Heart right ventricle (tissue), 16 donors: ENCODE measurements at regions of chr12 and their contacts with region 1.

Region 1: GRCh38 chr12:27534060-27534764 is 10.2 kb downstream of the PPFIBP1 start:
- DNase-seq: no peak
- ATAC-seq: no peak
- H3K4me3 ChIP-seq: no peak overlapping the region
- H3K27ac ChIP-seq: peak overlapping the region in 4 of 10 donors; percentile 7 to 39 (median 19)
- H3K4me1 ChIP-seq: peaks cover 28 to 94% (median 77%) of the 10 kb centered on the region in 9 donors
- H3K27me3 ChIP-seq: no peaks in the 10 kb centered on the region
- CTCF ChIP-seq: no peak

Region 2: DNA sequence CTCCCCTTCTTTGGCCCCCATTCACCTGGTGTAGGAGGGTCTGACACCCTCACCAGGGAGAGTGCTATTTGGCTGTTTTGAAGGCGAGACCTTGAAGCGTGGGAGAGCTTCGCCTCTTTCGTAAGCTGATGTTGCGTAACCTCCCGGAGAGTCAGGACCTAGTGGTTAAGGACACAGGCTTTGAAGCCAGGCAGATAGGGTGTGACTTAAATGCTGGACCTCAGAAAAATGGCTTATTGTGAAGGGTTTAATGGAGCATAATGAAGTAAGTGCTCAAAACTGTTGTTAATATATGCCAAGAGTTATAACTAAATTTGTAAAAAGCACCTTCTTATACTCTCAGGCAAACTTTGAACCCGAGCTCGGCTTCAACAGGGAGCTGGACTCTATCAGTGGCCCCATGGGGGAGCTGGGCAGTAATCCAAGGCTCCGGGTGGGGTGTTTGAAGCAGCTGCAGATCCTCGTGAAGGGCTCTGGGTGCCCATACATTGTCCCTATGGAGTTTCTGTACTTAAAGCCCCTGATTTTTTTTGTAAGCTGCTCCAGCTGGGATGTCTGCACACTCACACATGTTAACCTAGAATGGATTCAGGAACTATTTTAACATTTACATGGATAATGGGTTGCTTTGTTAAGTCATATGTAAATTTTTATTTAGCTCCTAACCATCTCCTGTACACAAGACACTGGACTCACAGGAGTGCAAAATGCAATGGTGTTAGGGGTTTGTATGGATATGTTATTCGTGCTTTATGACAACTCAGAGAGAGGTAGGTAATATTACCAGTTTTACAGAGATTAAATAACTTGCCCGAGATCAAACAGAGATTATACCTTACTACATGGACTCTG is 15.8 kb after region 1 on chr12:
- intact Hi-C with region 1: loop called in 1 of 10 experiments (anchors 2 kb)
- DNase-seq: peak; percentile 79 to 90
- ATAC-seq: peak; percentile 85 to 93 (median 89)
- H3K4me3 ChIP-seq: peak overlapping the region in 4 of 10 donors; percentile 2 to 30 (median 17)
- H3K27ac ChIP-seq: peak overlapping the region; percentile 65 to 96 (median 83)
- H3K4me1 ChIP-seq: peaks cover 30 to 100% (median 94%) of the 10 kb centered on the region in 9 donors
- H3K27me3 ChIP-seq: no peaks in the 10 kb centered on the region
- CTCF ChIP-seq: peak in 1 of 9 donors; percentile 10

Region 3: DNA sequence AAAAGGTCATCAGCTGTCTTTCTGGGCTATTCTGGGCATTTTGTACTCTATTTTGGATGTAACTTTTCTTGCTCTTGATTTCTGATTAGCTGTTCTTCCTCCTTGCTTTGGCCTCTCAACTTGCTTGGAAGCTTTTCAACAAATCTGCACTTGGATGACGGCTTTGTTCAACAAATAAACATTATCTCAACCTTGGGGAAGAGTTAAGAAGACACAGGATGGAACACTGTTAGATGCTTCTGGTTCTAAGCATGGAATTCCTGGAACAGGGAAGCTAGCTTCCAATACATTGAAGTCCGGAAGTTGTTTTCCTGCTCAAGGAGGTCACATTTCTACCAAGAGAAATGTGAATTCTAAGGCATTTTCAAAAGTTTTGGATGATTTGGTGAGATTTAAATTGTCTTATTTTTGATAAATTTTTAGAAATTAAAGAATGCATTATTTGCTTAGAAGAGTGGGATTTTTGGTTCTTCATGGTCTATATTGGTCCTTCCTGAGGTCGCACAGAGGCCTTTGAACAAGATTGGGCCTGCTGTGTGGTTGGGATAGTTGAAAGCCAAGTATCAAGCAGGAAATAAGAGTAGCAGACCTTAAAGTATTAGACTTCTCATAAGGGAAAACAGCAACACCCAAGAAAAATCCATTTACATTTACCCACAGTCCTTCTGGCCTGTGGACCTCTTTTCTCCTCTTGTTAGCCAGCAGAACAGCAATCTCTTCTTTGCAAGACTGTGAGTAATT is 49.0 kb after region 1 on chr12:
- intact Hi-C with region 1: loop called in 3 of 10 experiments (anchors 5 to 10 kb)
- DNase-seq: peak in 1 of 2 donors; percentile 68
- ATAC-seq: peak; percentile 54 to 82 (median 76)
- H3K4me3 ChIP-seq: no peak overlapping the region
- H3K27ac ChIP-seq: peak overlapping the region; percentile 57 to 89 (median 70)
- H3K4me1 ChIP-seq: peaks cover 25 to 92% (median 82%) of the 10 kb centered on the region in 9 donors
- H3K27me3 ChIP-seq: no peaks in the 10 kb centered on the region
- CTCF ChIP-seq: no peak

Region 4: GRCh38 chr12:27627123-27627835 is 93.1 kb after region 1 on chr12:
- intact Hi-C with region 1: loop called in 5 of 10 experiments (anchors 5 to 10 kb)
- DNase-seq: no peak
- ATAC-seq: peak in 2 of 8 donors; percentile 51 to 54
- H3K4me3 ChIP-seq: no peak overlapping the region
- H3K27ac ChIP-seq: peak overlapping the region in 7 of 10 donors; percentile 2 to 62 (median 18)
- H3K4me1 ChIP-seq: peaks cover 6 to 88% (median 57%) of the 10 kb centered on the region in 9 donors
- H3K27me3 ChIP-seq: no peaks in the 10 kb centered on the region
- CTCF ChIP-seq: no peak

Region 5: DNA sequence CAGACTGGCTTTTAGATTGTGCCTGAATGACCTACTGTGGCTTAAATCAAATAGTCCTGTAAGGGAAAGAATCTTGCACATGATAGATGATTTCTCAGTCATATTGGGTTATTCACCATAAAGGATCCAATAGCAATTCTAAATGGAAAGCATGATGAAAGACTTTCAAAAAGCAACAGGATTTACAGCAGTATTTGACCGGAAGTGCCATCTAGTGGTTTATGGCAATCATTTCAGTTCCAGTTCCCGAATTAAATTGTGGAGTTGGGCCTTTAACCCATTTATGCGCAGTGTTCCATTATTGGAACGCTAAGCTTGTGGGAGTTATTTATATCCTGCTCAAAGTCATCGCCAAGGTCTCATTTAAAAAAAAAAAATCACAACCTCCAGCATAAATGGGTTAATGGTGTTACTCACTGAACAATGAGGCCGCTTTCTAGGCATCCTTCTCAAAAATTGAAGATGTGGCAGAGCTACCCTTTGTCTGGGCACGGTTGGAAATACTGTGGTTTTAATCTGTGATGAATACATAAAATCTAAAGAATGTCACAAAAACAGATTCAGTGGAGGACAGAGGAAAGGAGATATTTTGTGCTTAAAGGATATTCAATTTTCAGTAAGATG is 101.2 kb after region 1 on chr12:
- intact Hi-C with region 1: loop called in 5 of 10 experiments (anchors 5 to 10 kb)
- DNase-seq: no peak
- ATAC-seq: peak in 1 of 8 donors; percentile 44
- H3K4me3 ChIP-seq: no peak overlapping the region
- H3K27ac ChIP-seq: peak overlapping the region in 2 of 10 donors; percentile 3 to 35
- H3K4me1 ChIP-seq: peaks cover 4 to 60% (median 42%) of the 10 kb centered on the region in 9 donors
- H3K27me3 ChIP-seq: no peaks in the 10 kb centered on the region
- CTCF ChIP-seq: peak; percentile 31 to 75 (median 71)